ENCODE measurements at regions of chr20 and their contacts with region 1.

Region 1: GRCh38 chr20:4006640-4007039 is 8.7 kb downstream of the RNF24 start:
- DNase-seq: no peak
- H3K4me3 ChIP-seq: no peak overlapping the region
- H3K27ac ChIP-seq: no peak overlapping the region
- H3K4me1 ChIP-seq: no peaks in the 10 kb centered on the region
- H3K27me3 ChIP-seq: no peaks in the 10 kb centered on the region
- CTCF ChIP-seq: no peak

Region 2: GRCh38 chr20:3825526-3825925 is 181.1 kb before region 1 on chr20:
- CTCF ChIA-PET with region 1: no interaction called
- dilution Hi-C with region 1: no loop called
- in situ Hi-C with region 1: no loop called
- intact Hi-C with region 1: no loop called
- DNase-seq: no peak
- H3K4me3 ChIP-seq: no peak overlapping the region
- H3K27ac ChIP-seq: no peak overlapping the region
- H3K4me1 ChIP-seq: peaks cover 8% of the 10 kb centered on the region
- H3K27me3 ChIP-seq: no peaks in the 10 kb centered on the region
- CTCF ChIP-seq: no peak

Region 3: GRCh38 chr20:3964719-3965118 is 41.9 kb before region 1 on chr20:
- CTCF ChIA-PET with region 1: no interaction called
- dilution Hi-C with region 1: loop called (anchors 5 kb)
- in situ Hi-C with region 1: no loop called
- intact Hi-C with region 1: no loop called
- DNase-seq: no peak
- H3K4me3 ChIP-seq: no peak overlapping the region
- H3K27ac ChIP-seq: no peak overlapping the region
- H3K4me1 ChIP-seq: no peaks in the 10 kb centered on the region
- H3K27me3 ChIP-seq: no peaks in the 10 kb centered on the region
- CTCF ChIP-seq: no peak

Measured in mammary epithelial cell (primary cell).